OCI-LY7 (cell line): ENCODE measurements at regions of chr19 and their contacts with region 1.

Region 1: DNA sequence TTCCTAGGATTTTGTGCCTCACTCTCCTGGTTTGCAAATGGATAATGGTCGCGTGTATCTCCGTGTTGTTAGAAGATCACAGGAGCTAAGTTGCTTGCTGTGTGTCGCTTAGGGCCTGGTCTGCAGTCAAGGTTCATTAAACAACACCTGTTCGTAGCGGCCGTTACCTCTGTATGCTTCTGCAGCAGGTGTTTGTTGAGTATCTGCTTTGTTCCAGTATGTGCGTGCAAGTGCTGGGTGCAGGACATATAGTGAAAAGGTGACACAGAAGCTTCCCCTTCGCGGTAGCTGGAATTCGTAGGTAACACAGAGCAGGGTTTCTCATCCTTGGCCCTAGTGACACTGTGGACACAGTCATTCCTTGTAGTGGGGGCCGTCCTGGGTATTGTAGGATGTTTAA is 5.4 kb downstream of the MED25 start:
- DNase-seq: peak; percentile 96
- H3K4me3 ChIP-seq: peak overlapping the region; percentile 59
- H3K27ac ChIP-seq: peak overlapping the region; percentile 94
- H3K4me1 ChIP-seq: peaks cover 56% of the 10 kb centered on the region
- CTCF ChIP-seq: no peak

Region 2: DNA sequence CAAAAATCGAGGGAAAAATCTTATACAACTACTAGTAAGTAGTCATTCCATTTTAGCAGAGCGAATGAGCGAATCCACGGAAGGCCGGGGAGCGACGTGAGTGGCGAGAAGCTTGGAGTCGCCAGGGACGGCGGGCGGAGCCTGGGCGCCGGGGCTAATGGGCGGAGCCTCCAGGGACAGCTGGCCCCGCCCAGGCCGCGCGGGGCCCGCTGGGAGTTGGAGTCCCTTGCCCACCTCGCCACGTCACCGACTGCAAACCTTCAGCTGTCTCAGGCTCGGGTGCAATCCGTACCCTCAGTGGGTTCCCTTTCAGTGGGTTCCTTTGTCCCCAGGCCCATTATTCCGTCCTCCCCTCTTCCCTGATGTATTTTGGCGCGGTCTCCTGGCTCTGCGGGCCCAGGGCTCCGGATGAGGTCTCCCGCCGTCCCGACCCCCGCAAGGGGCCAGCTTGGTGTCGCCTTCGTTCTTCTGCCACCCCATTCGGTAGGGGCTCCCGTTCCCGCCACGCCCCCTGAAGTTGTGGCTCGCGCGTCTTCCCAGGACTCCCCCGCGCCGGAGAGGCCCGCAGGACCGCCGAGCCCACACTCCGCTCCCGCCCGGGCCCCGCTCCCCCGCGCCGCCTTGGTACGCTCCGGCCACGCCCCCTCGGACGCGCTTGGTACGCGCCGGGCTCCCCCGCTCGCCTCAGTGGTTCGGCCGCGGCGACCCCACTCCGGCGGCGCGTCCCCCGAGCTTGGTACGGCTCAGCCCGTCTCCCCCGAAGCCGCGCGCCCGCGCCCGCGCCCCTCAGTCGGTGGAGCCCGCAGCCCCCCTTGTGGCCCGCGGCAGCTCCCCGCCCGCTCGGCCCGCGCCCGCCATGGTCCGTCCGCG is 27.2 kb after region 1 on chr19 and contains the start of gene PTOV1:
- CTCF ChIA-PET with region 1: no interaction called
- POLR2A ChIA-PET with region 1: interaction called, 8 read pairs
- intact Hi-C with region 1: loop called (anchors 2 kb)
- DNase-seq: peak; percentile 97
- H3K4me3 ChIP-seq: peak within 1 kb of the TSS; percentile 88
- H3K27ac ChIP-seq: peak within 1 kb of the TSS; percentile 87
- H3K4me1 ChIP-seq: peaks cover 28% of the 10 kb centered on the region
- CTCF ChIP-seq: no peak
- total RNA-seq, gene PTOV1: 101 and 124 TPM in 2 replicates